GM12878 (cell line): ENCODE measurements at regions of chr14 and their contacts with region 1.

Region 1: GRCh38 chr14:95527387-95528002 is 7.4 kb upstream of the GLRX5 start:
- DNase-seq: no peak
- ATAC-seq: peak; percentile 71
- H3K4me3 ChIP-seq: no peak overlapping the region
- H3K27ac ChIP-seq: no peak overlapping the region
- H3K4me1 ChIP-seq: no peaks in the 10 kb centered on the region; the same call in 1 of the 2 replicates
- H3K27me3 ChIP-seq: no peaks in the 10 kb centered on the region
- CTCF ChIP-seq: peak; percentile 59 to 74 (median 71); a peak in 5 of 6 replicates
- EP300 ChIP-seq: no peak
- POLR2A ChIP-seq: no peak
- RAD21 ChIP-seq: peak; percentile 82

Region 2: GRCh38 chr14:95431199-95432143 is 96.0 kb before region 1 on chr14:
- CTCF ChIA-PET with region 1: interaction called, 525 read pairs
- POLR2A ChIA-PET with region 1: no interaction called
- RAD21 ChIA-PET with region 1: interaction called, 13 read pairs
- SMC1A ChIA-PET with region 1: interaction called, 18 read pairs
- in situ Hi-C with region 1: no loop called
- intact Hi-C with region 1: no loop called
- DNase-seq: no peak
- ATAC-seq: peak; percentile 76
- H3K4me3 ChIP-seq: no peak overlapping the region
- H3K27ac ChIP-seq: no peak overlapping the region
- H3K4me1 ChIP-seq: no peaks in the 10 kb centered on the region
- H3K27me3 ChIP-seq: no peaks in the 10 kb centered on the region
- CTCF ChIP-seq: peak; percentile 28 to 46 (median 42); a peak in 4 of 6 replicates
- EP300 ChIP-seq: no peak
- POLR2A ChIP-seq: no peak
- RAD21 ChIP-seq: peak; percentile 61

Region 3: DNA sequence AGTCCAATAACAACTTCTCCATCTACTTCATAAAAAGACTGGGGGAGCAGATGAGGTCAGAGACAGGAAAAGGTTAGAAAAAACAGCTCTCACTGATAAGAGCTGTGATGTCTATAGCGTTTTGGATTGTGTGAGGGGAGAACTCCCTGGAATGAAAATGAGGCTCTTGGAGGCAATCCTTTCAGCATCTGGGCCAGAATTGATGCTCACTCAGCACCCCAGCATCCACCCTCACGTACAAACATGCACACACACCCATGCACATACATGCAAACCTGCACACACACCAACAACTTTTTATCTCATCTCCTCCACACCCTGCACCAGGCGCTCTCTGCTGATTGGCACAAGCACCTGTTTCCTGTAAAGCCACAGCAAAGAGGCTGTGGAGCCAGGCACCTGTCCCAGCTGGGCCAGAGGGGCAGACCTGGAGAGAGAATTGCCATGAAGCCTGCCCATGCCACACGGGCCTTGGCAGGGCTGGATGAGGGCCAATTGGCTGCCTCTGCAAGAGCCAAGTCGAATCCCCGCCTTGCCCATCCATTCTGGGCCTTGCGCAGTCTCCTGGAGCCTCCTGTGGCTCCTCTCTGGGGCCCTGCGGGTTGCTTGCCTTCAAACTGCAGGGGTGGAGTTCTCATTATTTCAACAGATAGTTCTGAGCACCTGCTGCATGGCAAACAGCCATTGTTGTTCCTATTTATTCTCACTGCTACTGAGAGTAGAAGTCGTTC is 64.2 kb before region 1 on chr14:
- CTCF ChIA-PET with region 1: interaction called, 30 read pairs
- POLR2A ChIA-PET with region 1: no interaction called
- RAD21 ChIA-PET with region 1: interaction called, 6 read pairs
- SMC1A ChIA-PET with region 1: interaction called, 12 read pairs
- in situ Hi-C with region 1: no loop called
- intact Hi-C with region 1: no loop called
- DNase-seq: no peak
- ATAC-seq: no peak
- H3K4me3 ChIP-seq: no peak overlapping the region
- H3K27ac ChIP-seq: no peak overlapping the region
- H3K4me1 ChIP-seq: peaks cover 16% of the 10 kb centered on the region
- H3K27me3 ChIP-seq: no peaks in the 10 kb centered on the region
- CTCF ChIP-seq: no peak
- EP300 ChIP-seq: no peak
- POLR2A ChIP-seq: no peak
- RAD21 ChIP-seq: no peak

Region 4: DNA sequence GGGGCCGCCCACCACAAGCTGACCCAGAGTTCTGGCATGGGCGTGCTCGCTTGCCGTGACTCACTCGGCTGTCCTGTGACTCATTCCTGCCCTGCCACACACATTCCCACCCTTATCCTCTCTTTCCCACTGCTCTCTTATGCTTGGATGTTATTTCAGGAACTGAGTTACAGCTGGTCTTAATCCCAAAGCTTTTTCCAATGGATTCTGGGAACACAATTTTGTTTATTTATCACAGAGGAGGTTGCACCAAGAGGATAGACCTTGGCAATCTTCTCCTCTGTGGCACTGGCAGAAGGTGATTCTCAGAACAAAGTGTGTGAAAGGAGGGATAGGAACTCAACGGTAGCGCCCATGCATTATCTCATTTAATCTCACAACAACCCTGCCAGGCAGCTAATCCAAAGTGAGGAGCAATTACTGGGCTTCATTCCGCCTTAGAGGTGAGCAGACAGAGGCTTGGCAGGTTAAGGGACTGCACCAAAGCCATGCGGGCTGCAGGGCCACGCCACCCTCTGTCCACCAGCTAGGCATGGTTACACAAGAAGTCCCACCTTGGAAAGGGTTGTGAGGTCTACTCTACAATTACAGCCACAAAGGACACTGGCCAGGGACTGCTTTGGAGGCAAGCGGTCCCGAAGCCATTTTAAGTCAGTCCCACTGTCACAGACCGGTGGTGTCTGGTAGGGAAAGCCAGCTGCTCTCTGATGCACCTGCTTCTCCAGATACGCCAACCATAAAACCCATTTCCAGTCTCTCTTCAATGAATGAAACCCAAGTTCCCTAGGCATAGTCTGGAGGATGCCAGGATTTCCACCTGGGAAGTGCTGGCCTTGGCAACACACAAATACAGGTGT is 44.0 kb before region 1 on chr14:
- CTCF ChIA-PET with region 1: interaction called, 14 read pairs
- POLR2A ChIA-PET with region 1: no interaction called
- RAD21 ChIA-PET with region 1: interaction called, 13 read pairs
- SMC1A ChIA-PET with region 1: interaction called, 15 read pairs
- in situ Hi-C with region 1: no loop called
- intact Hi-C with region 1: no loop called
- DNase-seq: no peak
- ATAC-seq: no peak
- H3K4me3 ChIP-seq: no peak overlapping the region
- H3K27ac ChIP-seq: no peak overlapping the region
- H3K4me1 ChIP-seq: peaks cover 24% of the 10 kb centered on the region
- H3K27me3 ChIP-seq: no peaks in the 10 kb centered on the region
- CTCF ChIP-seq: no peak
- EP300 ChIP-seq: no peak
- POLR2A ChIP-seq: no peak
- RAD21 ChIP-seq: no peak

Region 5: DNA sequence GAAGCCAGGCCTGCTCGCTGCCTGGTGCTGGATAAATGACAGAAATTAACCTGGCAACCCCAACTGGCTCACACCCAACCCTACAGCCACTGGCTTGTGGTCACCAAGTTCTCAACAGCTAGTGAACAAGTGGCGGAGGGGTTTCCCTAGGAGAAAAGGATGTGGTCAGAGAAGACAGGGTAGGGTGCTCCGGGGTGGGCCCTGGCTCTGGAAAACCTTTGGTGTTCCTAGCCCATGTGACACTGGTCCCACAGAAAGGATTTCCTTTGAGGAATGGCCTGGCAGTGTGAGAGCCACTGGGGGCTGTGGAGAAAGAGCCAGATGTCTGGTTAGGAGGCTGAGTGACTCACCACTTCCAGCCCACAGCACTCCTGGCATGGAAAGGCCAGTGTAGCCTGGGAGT is 19.8 kb before region 1 on chr14:
- CTCF ChIA-PET with region 1: interaction called, 19 read pairs
- POLR2A ChIA-PET with region 1: interaction called, 4 read pairs
- RAD21 ChIA-PET with region 1: interaction called, 11 read pairs
- SMC1A ChIA-PET with region 1: interaction called, 107 read pairs
- in situ Hi-C with region 1: no loop called
- intact Hi-C with region 1: no loop called
- DNase-seq: no peak
- ATAC-seq: peak; percentile 54
- H3K4me3 ChIP-seq: no peak overlapping the region; the same call in 1 of the 2 replicates
- H3K27ac ChIP-seq: peak overlapping the region; percentile 50
- H3K4me1 ChIP-seq: peaks cover 48% of the 10 kb centered on the region
- H3K27me3 ChIP-seq: no peaks in the 10 kb centered on the region
- CTCF ChIP-seq: no peak
- EP300 ChIP-seq: no peak
- POLR2A ChIP-seq: no peak
- RAD21 ChIP-seq: no peak

Region 6: DNA sequence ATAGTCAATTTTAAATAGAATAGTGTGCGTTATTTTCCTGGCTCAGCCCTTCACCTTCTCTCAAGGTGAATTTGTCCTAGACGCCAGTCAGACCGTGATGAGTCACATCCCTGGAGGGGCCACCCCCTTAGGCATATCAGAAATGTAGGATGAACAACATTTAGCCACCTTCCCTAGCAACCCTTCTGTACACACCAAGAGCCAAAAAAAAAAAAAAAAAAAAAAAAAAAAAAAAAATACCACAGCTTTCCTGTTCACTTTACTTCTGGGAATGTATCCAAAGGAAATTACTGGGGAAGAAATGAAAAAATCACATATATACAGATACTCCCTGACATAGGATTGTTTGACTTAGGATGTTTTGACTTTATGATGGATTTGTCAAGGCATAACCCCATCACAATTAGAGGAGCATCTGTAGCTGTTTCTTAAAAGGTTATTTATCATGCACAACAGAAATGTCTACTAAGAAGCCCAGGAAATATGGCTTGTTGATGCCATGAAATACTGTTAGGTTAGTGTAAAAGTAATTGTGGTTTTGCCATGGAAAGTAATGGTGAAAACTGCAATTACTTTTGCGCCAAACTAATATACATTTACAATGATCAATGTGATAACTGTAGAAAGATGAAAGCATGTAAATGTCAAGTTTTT is 609.0 kb after region 1 on chr14:
- CTCF ChIA-PET with region 1: no interaction called
- POLR2A ChIA-PET with region 1: no interaction called
- RAD21 ChIA-PET with region 1: no interaction called
- SMC1A ChIA-PET with region 1: no interaction called
- in situ Hi-C with region 1: no loop called
- intact Hi-C with region 1: no loop called
- DNase-seq: no peak
- ATAC-seq: no peak
- H3K4me3 ChIP-seq: no peak overlapping the region
- H3K27ac ChIP-seq: no peak overlapping the region
- H3K4me1 ChIP-seq: no peaks in the 10 kb centered on the region
- H3K27me3 ChIP-seq: no peaks in the 10 kb centered on the region; a peak in 1 of 4 replicates
- CTCF ChIP-seq: no peak
- EP300 ChIP-seq: no peak
- POLR2A ChIP-seq: no peak
- RAD21 ChIP-seq: no peak